ENCODE measurements at regions of chr22 and their contacts with region 1.

Region 1: DNA sequence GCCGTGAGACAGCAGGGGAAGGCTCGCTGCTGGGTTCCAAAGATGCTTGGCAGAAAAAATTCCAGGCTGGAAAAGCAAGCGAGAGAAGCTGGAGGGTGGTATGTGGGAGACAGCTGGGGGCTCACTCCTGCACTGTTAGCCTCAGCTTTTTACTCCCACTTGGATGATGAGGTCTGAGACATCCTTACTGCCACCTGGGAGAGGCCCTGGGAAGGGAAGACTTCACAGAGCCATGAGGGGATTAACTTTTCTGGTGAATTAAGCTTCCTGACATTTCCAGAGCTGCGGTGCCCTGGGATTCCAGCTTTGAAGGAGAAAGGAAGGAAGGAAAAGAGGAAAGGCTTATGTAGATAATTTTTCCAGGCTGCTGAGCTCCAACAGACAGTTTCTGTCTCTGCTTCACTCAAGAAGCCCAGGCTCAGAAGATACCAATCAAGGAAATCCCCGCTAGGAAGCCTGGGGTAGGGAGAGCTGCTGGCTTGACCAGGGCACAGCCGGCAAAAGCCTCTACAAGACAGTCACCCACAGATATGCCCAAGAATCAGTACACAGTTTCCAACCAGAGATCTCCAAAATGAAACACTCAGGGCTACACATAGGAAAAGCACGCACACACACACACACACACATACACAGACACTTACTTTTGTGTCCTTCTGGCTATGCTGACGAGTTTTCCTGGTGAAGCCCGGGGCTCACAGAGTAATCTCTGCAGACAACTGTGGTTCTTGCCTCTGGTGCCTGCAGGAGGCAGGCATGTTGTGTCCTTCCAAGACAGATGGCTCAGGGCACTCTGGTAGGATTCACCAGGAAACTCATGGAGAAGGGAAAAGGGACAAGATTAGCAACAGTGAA is 907 bp downstream of the MCHR1 start:
- DNase-seq: no peak
- H3K4me3 Mint-ChIP-seq: no peak overlapping the region
- H3K27ac Mint-ChIP-seq: peak overlapping the region; percentile 12
- H3K4me1 Mint-ChIP-seq: peaks cover 38% of the 10 kb centered on the region
- H3K27me3 Mint-ChIP-seq: peaks cover 12% of the 10 kb centered on the region

Region 2: GRCh38 chr22:40668611-40669411 is 11.4 kb before region 1 on chr22:
- intact Hi-C with region 1: loop called (anchors 1 kb)
- DNase-seq: no peak
- H3K4me3 Mint-ChIP-seq: peak overlapping the region; percentile 62
- H3K27ac Mint-ChIP-seq: peak overlapping the region; percentile 97
- H3K4me1 Mint-ChIP-seq: peaks cover 32% of the 10 kb centered on the region
- H3K27me3 Mint-ChIP-seq: no peaks in the 10 kb centered on the region

Region 3: DNA sequence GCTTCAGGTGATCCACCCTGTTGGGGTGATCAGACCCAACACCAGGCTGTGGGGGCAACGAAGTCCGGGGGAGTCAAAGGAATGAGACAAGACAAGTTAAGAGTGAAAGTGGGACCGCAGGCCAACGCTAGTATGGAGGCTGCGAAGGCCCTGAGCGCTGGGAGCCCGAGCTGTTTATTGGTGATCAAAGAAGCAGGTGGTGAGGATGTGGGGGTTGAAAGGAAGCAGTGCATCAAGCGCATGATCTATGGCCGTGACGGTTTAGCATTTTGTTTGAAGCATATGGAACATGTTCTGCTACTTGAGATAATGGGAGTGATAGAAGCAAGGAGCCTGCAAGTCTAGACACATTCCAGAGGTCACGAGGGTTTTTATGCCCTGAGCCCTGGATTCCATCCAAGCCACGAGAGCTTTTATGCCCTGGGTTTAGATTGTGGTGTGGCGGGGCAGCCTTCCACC is 48.6 kb after region 1 on chr22:
- intact Hi-C with region 1: loop called (anchors 2 kb)
- DNase-seq: peak; percentile 53
- H3K4me3 Mint-ChIP-seq: peak overlapping the region; percentile 46
- H3K27ac Mint-ChIP-seq: peak overlapping the region; percentile 90
- H3K4me1 Mint-ChIP-seq: peaks cover 48% of the 10 kb centered on the region
- H3K27me3 Mint-ChIP-seq: no peaks in the 10 kb centered on the region

Region 4: DNA sequence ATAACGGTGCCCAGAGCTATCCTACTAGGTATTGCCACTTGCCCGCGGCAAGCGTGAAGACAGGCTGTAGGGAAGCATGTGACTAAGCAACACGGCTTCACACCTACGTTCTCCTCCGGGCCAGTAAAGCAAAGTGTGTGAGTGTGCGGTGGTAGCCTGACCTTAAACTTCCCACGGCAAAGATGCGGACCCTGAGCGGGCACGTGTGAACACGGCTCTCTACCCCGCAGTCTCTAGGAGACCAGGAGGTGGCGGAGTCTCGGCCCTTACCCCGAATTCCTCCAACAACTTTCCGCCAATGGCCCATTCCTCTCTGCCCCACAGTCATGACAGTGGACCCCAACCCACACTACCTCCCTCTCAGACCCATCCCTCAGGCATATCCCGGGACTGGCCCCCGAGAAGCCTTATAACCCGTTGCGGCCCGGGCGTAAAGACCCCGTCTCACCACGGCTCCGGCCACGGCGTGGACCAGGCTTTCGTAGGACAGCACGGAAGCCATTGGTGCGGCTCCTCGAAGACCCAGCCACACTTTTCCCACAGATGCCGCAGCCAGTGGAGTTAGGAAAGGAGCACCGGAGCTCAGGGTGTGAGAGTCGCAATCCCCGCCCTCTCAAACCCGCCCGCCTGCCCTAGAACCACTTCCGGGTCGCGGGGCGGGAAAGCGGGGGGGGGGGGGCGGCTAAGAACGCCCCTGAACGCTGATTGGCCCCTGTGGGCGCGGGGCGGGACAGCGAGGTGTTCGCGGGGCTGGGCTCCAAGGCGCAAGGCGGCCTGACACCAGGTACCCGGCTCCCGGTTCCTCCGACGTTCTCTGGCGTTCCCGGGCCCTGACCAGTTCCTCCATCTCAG is 138.8 kb after region 1 on chr22 and contains the start of gene SLC25A17:
- intact Hi-C with region 1: loop called (anchors 1 kb)
- DNase-seq: peak; percentile 82
- H3K4me3 Mint-ChIP-seq: peak within 1 kb of the TSS; percentile 87
- H3K27ac Mint-ChIP-seq: peak within 1 kb of the TSS; percentile 93
- H3K4me1 Mint-ChIP-seq: peaks cover 33% of the 10 kb centered on the region
- H3K27me3 Mint-ChIP-seq: no peaks in the 10 kb centered on the region
- total RNA-seq, gene SLC25A17: 29.4 and 34.0 TPM in 2 replicates

Measured in activated T-helper 1 cell treated with anti-CD3 and anti-CD28 coated beads, Interleukin-12 subunit alpha, Interleukin-12 subunit beta, Interleukin-2, Interleukin-4 antibody, amounts not matched to agents 30 ng/mL and 10 ng/mL and 1 ng/mL, durations not matched to agents 14 hours and 24 hours and 36 hours (primary cell).